ENCODE measurements at regions of chr7 and their contacts with region 1.

Region 1: GRCh38 chr7:83936056-83936708 is 258.4 kb downstream of the SEMA3A start:
- DNase-seq: peak; percentile 83

Region 2: DNA sequence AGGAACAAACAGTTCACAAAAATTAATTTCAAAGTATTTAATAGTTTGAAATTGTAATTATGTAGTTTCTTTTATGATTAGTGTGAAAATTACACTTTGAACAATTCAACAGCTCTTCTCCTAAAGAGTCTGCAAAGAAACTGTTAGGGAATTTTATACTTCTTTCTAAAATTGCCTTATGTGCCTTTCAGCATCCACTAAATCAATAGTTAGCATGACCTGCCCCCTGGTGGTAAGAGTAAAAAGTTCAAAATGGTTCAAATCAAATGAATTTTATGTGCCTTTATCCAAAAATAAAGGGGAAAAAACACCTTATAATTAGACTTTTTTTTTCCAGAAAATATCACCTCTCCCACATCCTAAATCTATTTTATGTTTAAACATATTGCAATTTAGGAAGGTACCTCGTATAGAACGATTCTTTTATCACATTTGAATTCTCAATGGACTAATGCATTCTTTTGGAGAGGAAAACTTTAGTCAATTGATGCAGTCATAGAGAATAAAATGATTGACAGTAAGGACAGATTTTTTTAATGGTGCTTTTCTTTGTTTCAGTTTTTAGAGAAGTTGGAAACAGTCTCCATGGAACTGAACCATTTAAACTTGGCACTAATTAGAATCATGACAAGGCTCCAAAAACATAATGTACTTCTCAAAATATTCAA is 1087.0 kb after region 1 on chr7:
- in situ Hi-C with region 1: loop called (anchors 25 kb)
- DNase-seq: peak; percentile 72

Measured in ACHN (cell line).